GM12878 (cell line): ENCODE measurements at regions of chr5 and their contacts with region 1.

Region 1: GRCh38 chr5:136141561-136141960 is 8.9 kb downstream of the SMAD5 start:
- DNase-seq: no peak
- ATAC-seq: peak; percentile 75
- H3K4me3 ChIP-seq: no peak overlapping the region
- H3K27ac ChIP-seq: no peak overlapping the region
- H3K4me1 ChIP-seq: no peaks in the 10 kb centered on the region
- H3K27me3 ChIP-seq: no peaks in the 10 kb centered on the region
- CTCF ChIP-seq: no peak
- EP300 ChIP-seq: peak in 1 of 2 experiments; percentile 31; a peak in 1 of 4 replicates
- POLR2A ChIP-seq: no peak
- RAD21 ChIP-seq: no peak

Region 2: DNA sequence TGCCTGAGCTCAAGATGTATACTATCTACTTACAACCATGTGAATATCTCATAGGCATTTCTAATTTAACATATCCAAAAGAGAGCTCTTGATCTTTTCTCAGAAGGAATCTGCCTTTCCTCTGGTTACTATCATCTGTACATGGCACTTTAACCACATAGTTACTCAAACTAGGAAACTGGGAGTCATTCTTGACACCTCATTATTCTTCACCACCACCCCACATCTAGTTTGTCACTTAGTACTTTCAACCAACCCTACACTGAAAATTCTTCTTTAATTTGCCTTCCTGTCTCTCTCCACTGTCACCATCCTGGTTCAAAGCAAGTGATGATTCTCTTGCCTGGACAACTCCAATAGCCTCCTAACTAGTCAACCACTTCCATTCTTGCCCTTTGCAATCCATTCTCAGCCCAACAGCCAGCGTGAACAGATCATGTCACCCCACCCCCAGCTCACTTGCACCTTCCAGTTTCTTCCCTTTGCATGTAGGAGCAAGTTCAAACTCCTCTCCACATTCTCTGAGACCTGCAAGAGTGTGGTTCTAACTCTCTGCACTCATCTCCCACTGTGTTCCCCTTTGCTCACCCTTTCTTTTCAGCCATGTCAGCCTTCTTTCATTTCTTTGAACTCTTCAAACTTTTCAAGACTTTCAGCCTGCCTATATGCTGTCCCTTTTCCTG is 26.2 kb before region 1 on chr5:
- CTCF ChIA-PET with region 1: interaction called, 3 read pairs
- POLR2A ChIA-PET with region 1: no interaction called
- RAD21 ChIA-PET with region 1: interaction called, 3 read pairs
- SMC1A ChIA-PET with region 1: interaction called, 10 read pairs
- in situ Hi-C with region 1: no loop called
- intact Hi-C with region 1: no loop called
- DNase-seq: no peak
- ATAC-seq: peak; percentile 44; the same call in 2 of the 3 replicates
- H3K4me3 ChIP-seq: no peak overlapping the region
- H3K27ac ChIP-seq: no peak overlapping the region
- H3K4me1 ChIP-seq: no peaks in the 10 kb centered on the region
- H3K27me3 ChIP-seq: peaks cover 0 to 2% of the 10 kb centered on the region in 2 experiments; a peak in 1 of 4 replicates
- CTCF ChIP-seq: no peak
- EP300 ChIP-seq: no peak
- POLR2A ChIP-seq: no peak
- RAD21 ChIP-seq: no peak